Activated CD8-positive, alpha-beta T cell treated with anti-CD3 and anti-CD28 coated beads for 36 hours (primary cell): ENCODE measurements at regions of chr22 and their contacts with region 1.

Region 1: DNA sequence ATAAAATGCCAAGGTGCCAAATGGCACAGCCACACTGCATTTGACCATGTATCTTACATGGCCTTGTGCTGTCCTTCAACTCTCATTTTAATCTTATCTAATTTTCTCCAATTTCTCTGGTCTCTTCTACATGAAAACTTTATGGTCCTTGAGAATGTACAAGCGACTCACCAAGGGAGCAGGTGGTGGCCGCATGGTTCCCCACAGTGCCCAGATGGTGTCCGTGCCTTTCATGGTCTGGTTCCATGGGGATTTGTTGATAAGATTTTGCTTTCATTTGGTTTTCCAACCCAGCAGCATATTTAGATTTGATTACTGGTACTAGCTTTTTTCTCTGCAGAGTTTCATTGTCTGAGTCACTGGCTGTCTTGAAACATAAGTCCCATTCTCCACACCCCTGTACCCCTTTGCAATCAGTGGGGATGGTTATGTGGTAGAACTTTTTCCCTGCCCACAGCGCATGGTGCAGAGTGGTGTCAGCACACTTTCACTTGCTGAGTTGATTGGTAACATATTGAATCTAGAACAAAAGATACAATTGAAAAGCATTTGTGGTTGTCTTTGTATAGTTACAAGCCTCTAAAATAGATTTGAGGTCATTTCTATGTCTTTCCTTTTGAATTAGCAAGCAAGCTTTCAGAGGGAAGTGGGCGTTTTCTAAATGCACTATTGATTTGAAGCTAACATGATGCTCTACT is 24.1 kb downstream of the ZNRF3 start:
- DNase-seq: peak; percentile 86
- ATAC-seq: peak; percentile 86
- H3K4me3 Mint-ChIP-seq: no peak overlapping the region
- H3K27ac Mint-ChIP-seq: peak overlapping the region; percentile 75
- H3K4me1 Mint-ChIP-seq: peaks cover 31% of the 10 kb centered on the region
- H3K27me3 Mint-ChIP-seq: peaks cover 31% of the 10 kb centered on the region
- CTCF ChIP-seq: no peak

Region 2: DNA sequence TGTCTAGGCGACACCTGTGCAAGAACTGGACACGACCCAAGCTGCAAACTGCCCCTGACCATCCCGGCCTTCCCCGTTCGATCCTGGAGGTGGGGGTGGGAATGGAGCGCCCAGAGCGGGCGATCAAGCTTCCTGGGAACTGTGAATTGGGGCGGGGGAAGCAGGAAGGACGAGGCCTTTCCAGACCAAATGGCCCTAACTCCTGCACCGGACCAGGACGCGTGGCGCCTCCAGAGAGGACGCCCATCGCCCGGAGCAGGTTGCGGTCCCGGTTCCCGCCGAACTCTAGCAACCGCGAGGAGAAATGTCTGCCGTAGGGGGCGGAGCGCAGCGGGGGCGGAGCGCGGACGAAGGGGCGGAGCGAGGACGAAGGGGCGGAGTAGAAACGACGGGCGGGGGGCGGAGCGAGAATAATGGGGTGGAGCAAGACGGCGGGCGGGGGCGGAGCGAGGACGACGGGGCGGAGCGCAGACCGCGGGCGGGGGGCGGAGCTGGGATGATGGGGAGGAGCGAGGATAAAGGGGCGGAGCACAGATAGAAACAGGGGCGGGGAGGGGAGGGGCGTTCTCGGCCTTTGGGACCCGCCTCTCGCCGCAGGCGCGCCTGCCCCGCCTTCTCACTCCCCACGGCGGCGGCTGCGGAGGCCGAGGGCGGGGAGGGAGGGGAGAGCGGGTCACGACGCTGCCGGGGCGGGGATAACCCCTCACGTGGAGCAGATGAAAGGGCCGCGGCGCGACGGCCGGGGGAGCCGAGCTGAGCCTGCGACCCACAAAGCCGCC is 24.4 kb before region 1 on chr22 and contains the start of gene ZNRF3:
- CTCF ChIA-PET with region 1: interaction called, 3 read pairs
- POLR2A ChIA-PET with region 1: interaction called, 11 read pairs
- intact Hi-C with region 1: no loop called
- DNase-seq: peak; percentile 90
- ATAC-seq: peak; percentile 94
- H3K4me3 Mint-ChIP-seq: peak within 1 kb of the TSS; percentile 75
- H3K27ac Mint-ChIP-seq: peak within 1 kb of the TSS; percentile 80
- H3K4me1 Mint-ChIP-seq: peaks cover 19% of the 10 kb centered on the region
- H3K27me3 Mint-ChIP-seq: peaks cover 31% of the 10 kb centered on the region
- CTCF ChIP-seq: no peak
- total RNA-seq, gene ZNRF3: 2.0 to 2.5 TPM